ENCODE measurements at regions of chr11 and their contacts with region 1.

Region 1: GRCh38 chr11:14907411-14908213 is 15.6 kb upstream of the CYP2R1 start:
- DNase-seq: peak in 1 of 2 donors; percentile 89
- H3K4me3 ChIP-seq: no peak overlapping the region
- H3K27ac ChIP-seq: no peak overlapping the region
- H3K4me1 ChIP-seq: peaks cover 3 to 4% of the 10 kb centered on the region in 2 donors
- H3K27me3 ChIP-seq: no peaks in the 10 kb centered on the region
- CTCF ChIP-seq: peak; percentile 61 to 81 (median 74)

Region 2: DNA sequence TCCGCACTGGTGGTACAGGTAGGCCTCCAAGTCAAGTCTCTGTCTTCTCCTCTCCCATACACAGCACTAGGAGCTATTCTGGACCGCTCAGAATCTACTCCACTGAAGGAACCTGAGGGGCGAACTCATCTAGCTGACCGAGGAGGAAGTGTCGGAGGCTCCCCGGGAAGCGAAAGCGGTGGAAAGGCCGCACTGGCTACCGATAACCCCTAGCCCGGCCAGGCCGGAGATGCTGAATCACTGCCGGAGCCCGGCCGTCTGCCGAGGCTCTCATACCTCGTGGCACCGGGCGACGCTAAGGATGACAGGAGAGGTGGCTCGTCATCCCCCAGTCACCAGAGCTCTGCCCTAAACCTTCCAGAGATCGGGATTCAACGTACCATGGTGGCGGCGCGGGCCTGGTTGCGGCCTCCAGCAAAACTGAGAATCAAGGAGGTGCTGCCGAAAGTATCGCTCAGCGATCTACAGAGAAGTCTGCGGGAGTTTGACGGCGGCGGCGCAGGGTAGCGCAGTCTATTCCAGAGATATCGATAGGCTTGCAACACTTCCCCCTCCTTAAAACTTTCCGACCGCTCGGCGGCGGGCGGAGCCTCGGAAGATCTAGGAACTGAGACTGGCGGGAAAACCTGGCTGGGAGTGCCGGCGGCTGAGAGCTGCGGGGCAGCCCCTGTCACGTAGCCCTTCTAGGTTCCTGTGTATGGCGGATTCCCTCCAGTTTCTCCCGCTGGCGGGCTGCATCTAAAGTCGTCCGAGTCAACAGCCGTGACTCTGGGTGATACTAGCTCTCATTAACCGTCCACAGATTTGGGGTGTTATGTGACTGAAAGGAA is 387.5 kb before region 1 on chr11 and contains the start of gene PSMA1:
- intact Hi-C with region 1: loop called (anchors 5 kb)
- DNase-seq: peak; percentile 82 to 98
- H3K4me3 ChIP-seq: peak within 1 kb of the TSS; percentile 85 to 91
- H3K27ac ChIP-seq: peak within 1 kb of the TSS; percentile 86 to 89
- H3K4me1 ChIP-seq: peaks cover 6 to 17% of the 10 kb centered on the region in 2 donors
- H3K27me3 ChIP-seq: no peaks in the 10 kb centered on the region
- CTCF ChIP-seq: peak; percentile 22 to 62 (median 45)
- total RNA-seq, gene PSMA1: 42.5 TPM

Region 3: GRCh38 chr11:14643697-14644225 is 263.9 kb before region 1 on chr11 and contains the start of gene PDE3B:
- intact Hi-C with region 1: loop called (anchors 5 kb)
- DNase-seq: peak; percentile 36 to 90
- H3K4me3 ChIP-seq: peak within 1 kb of the TSS; percentile 77 to 83
- H3K27ac ChIP-seq: peak within 1 kb of the TSS; percentile 84 to 87
- H3K4me1 ChIP-seq: peaks cover 7 to 8% of the 10 kb centered on the region in 2 donors
- H3K27me3 ChIP-seq: no peaks in the 10 kb centered on the region
- CTCF ChIP-seq: peak in 1 of 3 experiments; percentile 6
- total RNA-seq, gene PDE3B: 5.1 TPM

Region 4: DNA sequence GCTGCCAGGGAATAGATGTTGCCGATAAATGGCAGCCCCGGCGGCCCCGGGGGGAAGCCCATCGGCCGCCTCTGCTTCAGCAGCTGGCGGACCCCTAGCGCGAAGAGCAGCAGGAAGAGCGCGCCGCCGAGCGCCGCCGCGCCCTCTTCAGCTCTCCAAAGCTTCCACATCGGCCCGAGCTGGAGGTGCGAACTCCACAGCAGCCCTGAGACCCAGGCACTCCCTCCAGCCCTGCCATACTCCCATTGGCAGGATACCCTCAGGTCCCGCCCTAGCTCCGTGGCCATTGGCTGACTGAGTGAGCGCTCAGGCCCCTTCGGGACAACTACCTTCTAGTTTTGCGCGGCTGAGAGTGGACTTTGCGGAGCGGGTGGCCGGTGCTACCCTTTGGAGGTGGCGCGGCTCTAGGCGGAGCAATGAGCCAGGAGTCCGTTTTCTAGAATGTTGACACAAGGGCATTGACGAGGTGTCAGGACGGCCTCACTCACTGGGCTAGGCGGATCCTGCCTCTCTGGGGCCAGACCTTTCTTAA is 15.5 kb before region 1 on chr11 and contains the start of gene CYP2R1:
- intact Hi-C with region 1: loop called (anchors 2 kb)
- DNase-seq: peak; percentile 88 to 98
- H3K4me3 ChIP-seq: peak within 1 kb of the TSS; percentile 82
- H3K27ac ChIP-seq: peak within 1 kb of the TSS; percentile 90 to 95
- H3K4me1 ChIP-seq: peaks cover 0 to 16% of the 10 kb centered on the region in 2 donors
- H3K27me3 ChIP-seq: no peaks in the 10 kb centered on the region
- CTCF ChIP-seq: peak in 1 of 3 experiments; percentile 3
- total RNA-seq, gene CYP2R1: 40.1 TPM

Region 5: GRCh38 chr11:15208378-15209222 is 301.0 kb after region 1 on chr11:
- intact Hi-C with region 1: loop called (anchors 2 kb)
- DNase-seq: peak in 1 of 2 donors; percentile 82
- H3K4me3 ChIP-seq: no peak overlapping the region
- H3K27ac ChIP-seq: no peak overlapping the region
- H3K4me1 ChIP-seq: no peaks in the 10 kb centered on the region
- H3K27me3 ChIP-seq: no peaks in the 10 kb centered on the region
- CTCF ChIP-seq: peak; percentile 80 to 94 (median 92)

Measured in ascending aorta (tissue), 2 donors.